Sigmoid colon (tissue), 7 donors: ENCODE measurements at regions of chr16 and their contacts with region 1.

Region 1: DNA sequence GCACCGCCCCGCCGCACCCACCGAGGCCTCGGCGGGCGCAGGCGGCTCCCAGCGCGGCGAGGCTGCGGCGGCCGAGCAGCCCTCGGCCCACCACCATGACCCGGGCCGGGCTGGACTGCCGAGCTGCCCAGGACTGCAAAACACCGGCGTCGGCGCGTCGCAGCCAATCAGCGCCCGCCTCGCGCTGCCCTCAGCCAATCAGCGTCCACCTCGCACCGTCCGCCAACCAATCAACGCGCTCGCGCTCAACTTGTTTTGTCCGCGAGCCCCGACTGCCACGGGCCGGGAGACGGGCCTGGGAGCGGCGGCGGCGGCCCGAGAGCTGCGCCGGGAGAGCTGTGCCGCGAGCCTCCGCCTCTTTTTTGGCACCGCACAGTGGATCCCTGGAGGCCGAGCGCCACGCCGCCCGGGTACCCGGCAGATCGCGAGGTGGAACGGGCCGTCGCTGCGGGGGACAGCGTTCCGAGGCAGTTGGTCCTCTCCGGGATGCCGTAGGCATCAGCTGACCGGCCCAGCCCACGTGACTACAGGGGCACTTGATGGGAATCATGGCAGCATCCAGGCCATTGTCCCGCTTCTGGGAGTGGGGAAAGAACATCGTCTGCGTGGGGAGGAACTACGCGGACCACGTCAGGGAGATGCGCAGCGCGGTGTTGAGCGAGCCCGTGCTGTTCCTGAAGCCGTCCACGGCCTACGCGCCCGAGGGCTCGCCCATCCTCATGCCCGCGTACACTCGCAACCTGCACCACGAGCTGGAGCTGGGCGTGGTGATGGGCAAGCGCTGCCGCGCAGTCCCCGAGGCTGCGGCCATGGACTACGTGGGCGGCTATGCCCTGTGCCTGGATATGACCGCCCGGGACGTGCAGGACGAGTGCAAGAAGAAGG is at the starts of genes FAHD1 and HAGH:
- DNase-seq: peak; percentile 96
- H3K4me3 ChIP-seq: peak within 1 kb of the TSS; percentile 84 to 99 (median 84)
- H3K27ac ChIP-seq: peak within 1 kb of the TSS; percentile 88 to 94 (median 92)
- H3K4me1 ChIP-seq: peaks cover 0 to 49% (median 45%) of the 10 kb centered on the region in 4 donors
- H3K27me3 ChIP-seq: no peaks in the 10 kb centered on the region
- CTCF ChIP-seq: no peak
- EP300 ChIP-seq: no peak
- POLR2A ChIP-seq: peak in 1 of 2 donors; percentile 25
- total RNA-seq, gene FAHD1: 27.7 to 35.0 (median 29.3) TPM
- total RNA-seq, gene HAGH: 73.4 to 163 (median 140) TPM

Region 2: DNA sequence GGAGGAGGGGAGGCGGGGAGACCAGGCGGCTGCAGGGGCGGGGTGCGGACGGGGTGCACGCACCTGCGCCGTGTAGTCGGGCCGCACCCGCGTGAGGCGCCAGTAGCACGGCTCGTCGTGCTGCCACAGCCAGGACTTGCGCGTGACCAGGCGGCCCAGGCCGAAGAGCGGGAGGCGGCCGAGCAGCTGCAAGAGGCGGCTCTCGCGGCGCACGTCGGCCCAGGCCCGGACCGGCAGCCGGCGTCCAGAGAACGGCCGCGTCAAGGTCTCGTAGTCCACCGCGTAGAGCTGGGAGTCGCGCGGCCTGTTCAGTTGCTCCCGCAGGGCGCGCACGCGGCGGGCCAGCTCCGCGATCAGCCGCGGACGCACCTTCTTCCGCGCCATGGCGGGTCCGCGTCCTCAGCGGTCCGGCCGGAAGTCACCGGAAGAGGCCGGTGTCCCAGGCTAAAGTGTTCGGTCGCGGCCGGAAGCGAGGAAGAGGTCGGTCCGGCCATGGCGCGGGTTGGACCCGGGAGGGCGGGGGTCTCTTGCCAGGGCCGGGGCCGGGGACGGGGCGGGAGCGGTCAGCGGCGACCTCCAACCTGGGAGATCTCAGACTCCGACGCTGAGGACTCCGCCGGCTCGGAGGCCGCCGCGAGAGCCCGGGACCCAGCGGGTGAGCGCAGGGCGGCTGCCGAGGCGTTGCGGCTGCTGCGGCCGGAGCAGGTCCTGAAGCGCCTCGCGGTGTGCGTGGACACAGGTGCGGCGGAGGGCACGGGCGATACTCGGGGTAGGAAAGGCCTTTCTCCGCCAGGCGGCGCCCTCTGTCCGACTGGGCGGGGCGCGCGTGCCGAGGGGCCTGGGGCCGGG is 54.0 kb before region 1 on chr16 and contains the starts of genes EME2 and MRPS34:
- intact Hi-C with region 1: loop called (anchors 2 kb)
- DNase-seq: peak; percentile 90
- H3K4me3 ChIP-seq: peak within 1 kb of the TSS; percentile 64 to 93 (median 90)
- H3K27ac ChIP-seq: peak within 1 kb of the TSS; percentile 91 to 97 (median 96)
- H3K4me1 ChIP-seq: peaks cover 0 to 56% (median 47%) of the 10 kb centered on the region in 4 donors
- H3K27me3 ChIP-seq: no peaks in the 10 kb centered on the region
- CTCF ChIP-seq: peak; percentile 37 to 74 (median 64)
- EP300 ChIP-seq: peak in 1 of 4 donors; percentile 25
- POLR2A ChIP-seq: peak; percentile 55 to 68
- total RNA-seq, gene EME2: 4.3 to 10.5 (median 7.2) TPM
- total RNA-seq, gene MRPS34: 61.5 to 104 (median 71.1) TPM

Region 3: GRCh38 chr16:1794221-1794860 is 32.6 kb before region 1 on chr16:
- intact Hi-C with region 1: no loop called
- DNase-seq: peak; percentile 62
- H3K4me3 ChIP-seq: no peak overlapping the region
- H3K27ac ChIP-seq: no peak overlapping the region
- H3K4me1 ChIP-seq: no peaks in the 10 kb centered on the region
- H3K27me3 ChIP-seq: no peaks in the 10 kb centered on the region
- CTCF ChIP-seq: no peak
- EP300 ChIP-seq: no peak
- POLR2A ChIP-seq: no peak

Region 4: DNA sequence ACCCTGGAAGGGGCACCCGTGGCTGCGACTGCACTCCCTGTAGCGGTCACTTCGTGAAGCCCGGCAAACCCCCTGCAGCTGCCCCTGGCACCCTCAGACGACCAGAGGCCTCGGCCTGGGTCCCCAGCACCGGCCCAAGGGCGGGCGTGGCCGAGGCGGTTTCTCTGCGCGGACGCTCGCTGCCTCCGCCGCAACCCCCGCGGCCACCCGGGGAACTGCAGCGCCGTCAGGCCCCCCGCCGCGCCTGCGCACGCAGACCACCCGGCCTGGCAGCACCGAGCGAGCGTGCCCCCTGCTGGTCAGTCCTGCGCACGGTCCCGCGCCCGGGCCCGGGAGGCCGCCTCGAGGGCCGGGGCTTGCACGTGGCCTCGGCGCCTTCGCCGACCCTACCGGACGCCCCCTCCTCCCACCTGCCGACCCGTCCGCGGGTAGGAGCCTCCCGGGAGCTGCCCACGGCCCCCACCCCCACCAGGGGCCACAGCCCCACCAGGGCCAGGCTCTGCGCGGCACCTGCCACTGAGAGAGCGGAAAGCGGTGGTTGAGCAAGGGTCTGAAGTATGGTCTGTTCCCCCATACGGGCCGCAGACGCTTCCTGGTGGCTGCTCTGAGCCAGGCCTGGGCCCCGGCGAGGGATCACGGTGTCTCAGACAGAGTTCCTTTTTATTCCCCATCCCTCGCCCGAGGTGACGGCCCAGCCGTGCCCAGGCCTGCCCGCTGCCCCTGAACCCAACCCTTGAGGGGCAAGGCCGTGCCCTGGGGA is 102.8 kb after region 1 on chr16:
- intact Hi-C with region 1: loop called (anchors 1 kb)
- DNase-seq: peak; percentile 95
- H3K4me3 ChIP-seq: peak overlapping the region; percentile 34 to 82 (median 77)
- H3K27ac ChIP-seq: peak overlapping the region; percentile 80 to 96 (median 88)
- H3K4me1 ChIP-seq: peaks cover 0 to 12% (median 7%) of the 10 kb centered on the region in 4 donors
- H3K27me3 ChIP-seq: peaks cover 0 to 19% (median 5%) of the 10 kb centered on the region in 3 donors
- CTCF ChIP-seq: peak; percentile 27 to 100 (median 72)
- EP300 ChIP-seq: no peak
- POLR2A ChIP-seq: no peak